Left cardiac atrium (tissue), 4 donors: ENCODE measurements at regions of chr17 and their contacts with region 1.

Region 1: GRCh38 chr17:12667299-12667958 is 1.7 kb downstream of the MYOCD start:
- DNase-seq: no peak
- ATAC-seq: peak; percentile 60 to 72

Region 2: GRCh38 chr17:12180644-12181261 is 486.7 kb before region 1 on chr17:
- intact Hi-C with region 1: loop called in 1 of 2 experiments (anchors 2 kb)
- DNase-seq: no peak
- ATAC-seq: peak; percentile 72 to 74

Region 3: GRCh38 chr17:12250973-12251372 is 416.5 kb before region 1 on chr17:
- intact Hi-C with region 1: loop called (anchors 2 to 5 kb)
- DNase-seq: no peak
- ATAC-seq: no peak

Region 4: DNA sequence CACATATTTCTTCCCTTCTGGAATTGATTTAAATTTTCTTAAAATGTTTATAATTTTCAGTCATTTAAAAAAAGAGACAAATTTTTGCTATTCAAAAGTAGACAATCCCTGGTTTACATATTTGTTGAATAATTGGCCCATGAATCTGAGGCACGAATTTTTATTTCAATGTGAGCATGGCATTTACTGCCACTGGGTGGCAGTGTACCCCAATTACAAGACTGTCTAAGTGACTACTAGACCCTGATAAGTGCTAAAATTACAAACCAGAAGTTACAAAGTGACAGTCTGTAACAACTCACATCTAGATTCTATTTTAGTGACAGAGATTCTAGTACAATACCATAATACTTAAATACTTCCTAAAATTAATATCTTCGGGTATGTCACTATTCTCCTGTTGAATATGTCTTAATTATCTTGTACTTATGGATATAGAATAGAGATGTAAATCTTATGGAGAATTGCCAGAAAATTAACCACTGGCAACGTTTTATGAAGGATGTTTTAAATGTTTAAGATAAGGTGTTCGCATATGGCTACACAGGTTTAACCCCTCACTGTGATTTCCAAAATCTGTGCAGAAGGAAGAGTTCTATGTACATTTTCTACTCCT is 410.9 kb before region 1 on chr17:
- intact Hi-C with region 1: loop called (anchors 2 to 5 kb)
- DNase-seq: peak; percentile 28
- ATAC-seq: peak; percentile 72 to 74